Cardiac septum (tissue), 1 donor: ENCODE measurements at regions of chr2 and their contacts with region 1.

Region 1: GRCh38 chr2:106028192-106028591 is 165.9 kb downstream of the UXS1 start:
- DNase-seq: no peak

Region 2: DNA sequence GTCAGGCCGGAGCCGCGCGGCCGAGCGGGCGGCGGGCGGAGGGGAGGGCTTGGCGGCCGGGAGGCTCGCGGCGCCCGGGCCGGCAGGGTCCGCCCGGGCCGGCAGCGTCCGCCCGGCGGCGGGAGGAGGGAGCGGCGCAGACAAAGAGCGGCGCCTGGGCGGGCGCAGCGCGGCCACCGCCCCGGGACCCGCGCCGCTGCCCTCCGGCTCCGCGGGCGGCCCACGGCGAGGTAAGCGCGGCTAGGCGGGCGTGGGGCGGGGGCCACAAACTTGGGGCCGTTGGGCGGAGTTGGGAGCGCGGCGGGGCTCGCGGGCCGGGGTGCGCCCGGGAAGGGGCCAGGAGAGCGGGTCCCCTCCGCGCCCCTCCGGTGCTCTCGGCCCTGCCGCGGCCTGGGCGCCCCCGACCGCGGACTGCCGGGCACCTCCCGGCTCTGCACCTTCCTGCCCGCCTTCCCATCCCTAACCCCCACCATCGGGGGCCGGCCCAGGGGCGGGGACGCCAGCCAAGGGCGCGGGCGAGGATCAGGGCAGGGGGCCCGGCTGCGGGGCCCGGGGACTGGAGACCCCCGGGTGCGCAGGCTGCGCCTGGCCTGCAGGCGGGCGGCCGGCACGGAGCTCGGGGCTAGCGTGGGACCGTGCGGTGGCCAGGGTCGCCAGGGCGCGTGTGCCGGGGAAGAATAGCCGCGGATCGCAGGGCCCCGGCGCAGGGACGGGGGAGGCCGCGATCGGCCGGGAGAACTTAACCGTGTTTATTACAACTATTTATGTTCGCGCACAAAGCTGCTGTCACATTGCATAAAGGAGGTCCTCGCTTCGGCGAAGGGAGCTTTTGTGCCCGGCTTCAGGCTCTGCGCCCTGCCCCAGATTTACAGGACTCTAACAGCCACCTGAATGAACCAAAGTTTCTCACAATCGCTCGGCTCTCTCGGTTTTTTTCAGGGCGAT is 283.0 kb before region 1 on chr2 and contains the start of gene NCK2:
- intact Hi-C with region 1: loop called (anchors 5 kb)
- DNase-seq: no peak
- total RNA-seq, gene NCK2: 33.2 TPM

Region 3: GRCh38 chr2:105919826-105920225 is 108.4 kb before region 1 on chr2:
- intact Hi-C with region 1: no loop called
- DNase-seq: no peak

Region 4: GRCh38 chr2:106012001-106012590 is 16.1 kb before region 1 on chr2:
- intact Hi-C with region 1: loop called (anchors 2 kb)
- DNase-seq: no peak